Heart left ventricle (tissue), 16 donors: ENCODE measurements at regions of chr17 and their contacts with region 1.

Region 1: DNA sequence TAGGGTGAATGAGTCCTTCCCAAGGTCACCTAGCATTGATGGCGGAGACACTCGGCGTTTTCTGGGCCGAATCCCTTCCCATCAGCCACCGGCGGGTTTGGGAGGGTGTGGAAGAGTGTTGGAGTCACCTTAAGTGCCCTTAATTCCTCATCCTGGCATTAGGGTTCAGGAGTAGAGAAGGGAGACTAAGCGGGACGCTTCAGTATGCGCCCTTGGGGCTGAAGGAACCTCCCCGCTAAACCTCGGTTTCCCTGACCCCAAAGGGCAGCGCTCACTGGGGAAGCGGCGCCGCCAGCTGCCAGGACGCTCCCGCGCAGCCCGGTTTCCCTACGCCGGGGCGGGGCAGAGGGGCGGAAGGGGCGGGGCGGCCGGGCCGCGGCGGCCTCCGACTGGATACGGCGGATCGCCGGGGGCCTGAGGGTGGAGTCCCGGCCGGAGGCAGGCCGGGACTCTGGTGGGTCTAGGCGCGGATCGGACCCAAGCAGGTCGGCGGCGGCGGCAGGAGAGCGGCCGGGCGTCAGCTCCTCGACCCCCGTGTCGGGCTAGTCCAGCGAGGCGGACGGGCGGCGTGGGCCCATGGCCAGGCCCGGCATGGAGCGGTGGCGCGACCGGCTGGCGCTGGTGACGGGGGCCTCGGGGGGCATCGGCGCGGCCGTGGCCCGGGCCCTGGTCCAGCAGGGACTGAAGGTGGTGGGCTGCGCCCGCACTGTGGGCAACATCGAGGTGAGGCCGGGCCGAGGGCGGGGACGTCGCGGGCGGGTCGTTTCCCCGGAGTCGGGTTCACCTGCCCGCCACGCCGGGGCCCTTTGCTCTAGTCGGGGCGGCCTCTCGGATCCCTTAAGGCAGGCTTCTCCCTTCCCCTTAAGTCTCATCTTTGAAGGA is at the start of gene DHRS11:
- DNase-seq: peak; percentile 87 to 92 (median 89)
- ATAC-seq: peak; percentile 88 to 97 (median 96)
- H3K4me3 ChIP-seq: peak within 1 kb of the TSS; percentile 73 to 100 (median 90)
- H3K27ac ChIP-seq: peak within 1 kb of the TSS in 11 of 12 donors; percentile 24 to 86 (median 75)
- H3K4me1 ChIP-seq: peaks cover 0 to 33% (median 15%) of the 10 kb centered on the region in 12 donors
- H3K27me3 ChIP-seq: no peaks in the 10 kb centered on the region
- CTCF ChIP-seq: peak in 1 of 12 donors; percentile 21
- POLR2A ChIP-seq: peak in 1 of 2 donors; percentile 46
- total RNA-seq, gene DHRS11: 11.0 to 22.2 (median 13.5) TPM

Region 2: GRCh38 chr17:36463916-36464315 is 127.8 kb before region 1 on chr17:
- intact Hi-C with region 1: no loop called
- DNase-seq: peak; percentile 44 to 69 (median 52)
- ATAC-seq: peak; percentile 82 to 97 (median 94)
- H3K4me3 ChIP-seq: no peak overlapping the region
- H3K27ac ChIP-seq: no peak overlapping the region
- H3K4me1 ChIP-seq: peaks cover 0 to 11% (median 0%) of the 10 kb centered on the region in 12 donors
- H3K27me3 ChIP-seq: peaks cover 4 to 58% (median 28%) of the 10 kb centered on the region in 9 donors
- CTCF ChIP-seq: no peak
- POLR2A ChIP-seq: no peak

Region 3: GRCh38 chr17:36545465-36546417 is 45.9 kb before region 1 on chr17:
- intact Hi-C with region 1: loop called in 7 of 10 experiments (anchors 2 to 5 kb)
- DNase-seq: peak; percentile 96 to 97 (median 97)
- ATAC-seq: peak; percentile 90 to 95 (median 93)
- H3K4me3 ChIP-seq: peak overlapping the region; percentile 63 to 99 (median 84)
- H3K27ac ChIP-seq: peak overlapping the region; percentile 93 to 100 (median 99)
- H3K4me1 ChIP-seq: peaks cover 12 to 58% (median 43%) of the 10 kb centered on the region in 12 donors
- H3K27me3 ChIP-seq: no peaks in the 10 kb centered on the region
- CTCF ChIP-seq: no peak
- POLR2A ChIP-seq: peak in 1 of 2 donors; percentile 48

Region 4: GRCh38 chr17:36948717-36949460 is 357.2 kb after region 1 on chr17 and contains the start of gene AATF:
- intact Hi-C with region 1: loop called in 1 of 10 experiments (anchors 10 kb)
- DNase-seq: peak; percentile 96 to 97 (median 97)
- ATAC-seq: peak; percentile 99 to 100 (median 100)
- H3K4me3 ChIP-seq: peak within 1 kb of the TSS; percentile 63 to 99 (median 86)
- H3K27ac ChIP-seq: peak within 1 kb of the TSS; percentile 33 to 95 (median 84)
- H3K4me1 ChIP-seq: peaks cover 0 to 28% (median 18%) of the 10 kb centered on the region in 12 donors
- H3K27me3 ChIP-seq: peaks cover 24 to 41% (median 37%) of the 10 kb centered on the region in 9 donors
- CTCF ChIP-seq: no peak
- POLR2A ChIP-seq: peak in 1 of 2 donors; percentile 68
- total RNA-seq, gene AATF: 15.2 to 34.8 (median 28.9) TPM

Region 5: DNA sequence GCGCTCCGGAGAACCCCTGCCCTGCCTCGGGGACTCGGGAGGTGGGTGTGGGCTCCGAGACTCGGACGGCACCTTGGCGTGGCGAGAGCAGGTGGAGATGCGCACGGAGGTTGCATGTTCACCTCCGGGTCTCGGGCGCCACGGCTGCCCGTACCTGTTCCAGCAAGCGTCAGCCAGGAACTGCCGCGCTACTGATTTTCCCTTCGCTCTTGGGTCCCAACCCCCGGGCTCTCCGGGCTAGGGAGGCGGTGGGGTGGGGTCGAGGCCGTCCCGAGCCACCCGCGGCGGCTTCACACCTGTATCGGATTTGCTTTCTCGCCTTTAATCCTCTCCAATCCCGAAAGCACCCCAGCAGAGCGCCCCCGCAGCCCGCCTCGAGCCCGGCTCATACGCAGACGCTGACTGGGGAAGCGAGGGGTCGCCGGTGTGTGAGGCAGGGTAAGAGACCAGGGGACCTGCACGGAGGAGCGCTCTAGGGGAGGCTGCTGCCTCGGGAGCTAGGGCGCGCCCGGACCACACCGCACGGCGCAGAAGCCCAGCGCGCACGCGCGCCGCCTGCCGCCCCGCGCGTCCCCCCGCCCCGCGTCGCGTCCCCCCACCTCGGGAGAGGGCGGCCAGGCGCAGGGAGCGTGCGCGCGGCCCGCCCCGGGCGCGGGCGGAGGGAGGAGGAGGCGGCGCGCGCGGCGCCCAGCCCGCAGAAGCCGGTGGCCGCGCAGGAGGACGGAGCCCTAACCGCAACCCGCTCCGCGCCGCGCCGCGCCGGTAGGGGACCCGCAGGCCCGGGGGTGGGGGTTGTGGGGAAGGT is 897.7 kb after region 1 on chr17 and contains the start of gene DUSP14:
- intact Hi-C with region 1: loop called in 1 of 10 experiments (anchors 10 kb)
- DNase-seq: peak; percentile 82 to 90 (median 87)
- ATAC-seq: peak; percentile 60 to 87 (median 82)
- H3K4me3 ChIP-seq: peak within 1 kb of the TSS; percentile 77 to 97 (median 90)
- H3K27ac ChIP-seq: peak within 1 kb of the TSS; percentile 78 to 95 (median 90)
- H3K4me1 ChIP-seq: peaks cover 3 to 47% (median 24%) of the 10 kb centered on the region in 12 donors
- H3K27me3 ChIP-seq: no peaks in the 10 kb centered on the region
- CTCF ChIP-seq: peak in 1 of 12 donors; percentile 14
- POLR2A ChIP-seq: peak in 1 of 2 donors; percentile 69
- total RNA-seq, gene DUSP14: 13.4 to 39.1 (median 16.5) TPM